Stomach (tissue), 19 donors: ENCODE measurements at regions of chr20 and their contacts with region 1.

Region 1: GRCh38 chr20:39049684-39050554 is 87.8 kb downstream of the DHX35 start:
- DNase-seq: peak; percentile 75 to 93
- H3K4me3 ChIP-seq: peak overlapping the region; percentile 57 to 72 (median 64)
- H3K27ac ChIP-seq: peak overlapping the region; percentile 6 to 84 (median 64)
- H3K4me1 ChIP-seq: peaks cover 0 to 30% (median 14%) of the 10 kb centered on the region in 4 donors
- H3K27me3 ChIP-seq: peaks cover 0 to 26% (median 0%) of the 10 kb centered on the region in 3 donors
- CTCF ChIP-seq: peak in 5 of 7 experiments; percentile 93 to 97 (median 96)
- EP300 ChIP-seq: no peak
- POLR2A ChIP-seq: no peak

Region 2: DNA sequence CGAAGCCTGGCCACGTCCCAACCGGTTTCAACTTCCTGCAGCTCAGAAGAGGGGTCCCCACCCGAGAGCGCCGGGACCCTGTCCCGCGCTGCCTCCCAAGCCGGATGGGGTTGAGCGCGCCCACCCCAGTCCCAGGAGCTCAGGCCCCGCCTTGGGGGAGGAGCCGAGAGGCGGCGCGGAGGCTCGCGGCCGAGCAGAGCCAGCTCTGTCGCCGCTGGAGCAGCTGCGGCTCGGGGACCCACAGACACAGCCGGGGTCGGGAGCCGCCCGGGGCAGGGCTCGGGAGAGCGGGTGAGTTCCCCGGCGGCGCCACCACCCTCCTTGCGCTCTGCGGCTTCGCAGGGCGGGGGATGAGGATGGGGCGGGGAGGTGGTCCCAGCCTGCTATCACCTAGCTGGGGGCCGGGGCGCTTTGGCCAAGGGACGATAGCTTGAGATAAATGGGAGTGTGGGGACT is 244.4 kb before region 1 on chr20 and contains the start of gene PPP1R16B:
- intact Hi-C with region 1: no loop called
- DNase-seq: peak; percentile 50 to 84
- H3K4me3 ChIP-seq: peak within 1 kb of the TSS; percentile 53 to 66 (median 56)
- H3K27ac ChIP-seq: peak within 1 kb of the TSS; percentile 63 to 81 (median 71)
- H3K4me1 ChIP-seq: peaks cover 15 to 26% (median 18%) of the 10 kb centered on the region in 4 donors
- H3K27me3 ChIP-seq: peaks cover 4 to 59% (median 35%) of the 10 kb centered on the region in 3 donors
- CTCF ChIP-seq: no peak
- EP300 ChIP-seq: no peak
- POLR2A ChIP-seq: no peak
- total RNA-seq, gene PPP1R16B: 5.2 to 18.7 (median 11.0) TPM

Region 3: GRCh38 chr20:38926142-38926933 is 123.6 kb before region 1 on chr20 and contains the start of gene FAM83D:
- intact Hi-C with region 1: loop called (anchors 10 kb)
- DNase-seq: peak; percentile 94 to 98
- H3K4me3 ChIP-seq: peak within 1 kb of the TSS; percentile 60 to 82 (median 74)
- H3K27ac ChIP-seq: peak within 1 kb of the TSS in 4 of 5 donors; percentile 55 to 82 (median 70)
- H3K4me1 ChIP-seq: peaks cover 9 to 45% (median 23%) of the 10 kb centered on the region in 4 donors
- H3K27me3 ChIP-seq: peaks cover 0 to 8% (median 0%) of the 10 kb centered on the region in 3 donors
- CTCF ChIP-seq: peak in 2 of 7 experiments; percentile 70 to 80
- EP300 ChIP-seq: no peak
- POLR2A ChIP-seq: peak in 2 of 4 donors; percentile 15 to 46
- total RNA-seq, gene FAM83D: 2.0 to 289 (median 36.4) TPM

Region 4: DNA sequence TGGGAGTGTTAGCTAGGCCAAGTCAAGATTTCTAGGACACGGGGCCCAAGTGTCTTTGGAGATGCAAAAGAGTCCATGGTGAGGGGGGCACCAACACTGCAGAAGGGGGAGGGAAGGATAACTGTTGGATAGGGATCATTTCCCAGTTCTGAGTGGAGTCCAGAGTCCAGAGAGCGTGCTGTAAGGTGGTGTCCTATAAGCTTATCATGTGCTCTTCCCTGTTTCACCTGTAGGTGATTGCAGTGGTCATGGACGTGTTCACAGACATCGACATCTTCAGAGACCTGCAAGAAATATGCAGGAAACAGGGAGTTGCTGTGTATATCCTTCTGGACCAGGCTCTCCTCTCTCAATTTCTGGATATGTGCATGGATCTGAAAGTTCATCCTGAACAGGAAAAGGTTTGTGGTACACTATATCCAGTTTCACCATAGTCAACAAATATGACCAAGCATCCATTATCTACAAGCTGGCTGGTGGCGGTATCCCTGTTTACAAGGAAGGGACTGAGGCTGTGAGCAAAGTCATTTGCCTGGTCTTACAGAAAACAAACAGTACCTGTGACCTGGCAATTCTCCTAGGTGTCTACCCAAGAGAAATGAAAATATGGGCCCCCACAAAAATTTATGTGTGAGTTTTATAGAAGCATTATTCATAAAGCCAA is 108.1 kb before region 1 on chr20:
- intact Hi-C with region 1: no loop called
- DNase-seq: no peak
- H3K4me3 ChIP-seq: no peak overlapping the region
- H3K27ac ChIP-seq: no peak overlapping the region
- H3K4me1 ChIP-seq: peaks cover 0 to 9% (median 0%) of the 10 kb centered on the region in 4 donors
- H3K27me3 ChIP-seq: no peaks in the 10 kb centered on the region
- CTCF ChIP-seq: no peak
- EP300 ChIP-seq: no peak
- POLR2A ChIP-seq: no peak